PC-9 (cell line): ENCODE measurements at regions of chr2 and their contacts with region 1.

Region 1: DNA sequence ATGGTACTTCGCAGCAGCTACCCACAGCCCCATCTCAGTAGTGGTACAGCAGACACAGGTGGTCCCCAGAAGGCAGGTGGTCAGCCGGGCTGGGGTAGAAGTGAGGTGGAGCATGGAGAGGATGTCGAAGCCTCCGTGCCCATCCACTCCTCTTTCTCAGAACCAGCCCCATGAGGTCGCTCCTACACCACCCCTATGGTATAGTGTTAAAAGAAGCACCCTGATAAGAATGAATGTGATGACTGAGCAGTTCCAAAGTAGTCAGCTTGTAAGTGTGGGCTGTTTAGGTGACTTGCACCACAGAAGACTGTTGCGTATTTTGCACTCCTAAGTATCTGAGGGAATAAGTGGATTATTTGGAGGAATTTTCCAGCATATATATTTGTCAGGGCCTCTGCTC is 111.3 kb downstream of the WDSUB1 start:
- DNase-seq: no peak
- H3K4me3 ChIP-seq: no peak overlapping the region
- H3K27ac ChIP-seq: no peak overlapping the region
- H3K4me1 ChIP-seq: no peaks in the 10 kb centered on the region
- H3K27me3 ChIP-seq: no peaks in the 10 kb centered on the region
- CTCF ChIP-seq: no peak

Region 2: DNA sequence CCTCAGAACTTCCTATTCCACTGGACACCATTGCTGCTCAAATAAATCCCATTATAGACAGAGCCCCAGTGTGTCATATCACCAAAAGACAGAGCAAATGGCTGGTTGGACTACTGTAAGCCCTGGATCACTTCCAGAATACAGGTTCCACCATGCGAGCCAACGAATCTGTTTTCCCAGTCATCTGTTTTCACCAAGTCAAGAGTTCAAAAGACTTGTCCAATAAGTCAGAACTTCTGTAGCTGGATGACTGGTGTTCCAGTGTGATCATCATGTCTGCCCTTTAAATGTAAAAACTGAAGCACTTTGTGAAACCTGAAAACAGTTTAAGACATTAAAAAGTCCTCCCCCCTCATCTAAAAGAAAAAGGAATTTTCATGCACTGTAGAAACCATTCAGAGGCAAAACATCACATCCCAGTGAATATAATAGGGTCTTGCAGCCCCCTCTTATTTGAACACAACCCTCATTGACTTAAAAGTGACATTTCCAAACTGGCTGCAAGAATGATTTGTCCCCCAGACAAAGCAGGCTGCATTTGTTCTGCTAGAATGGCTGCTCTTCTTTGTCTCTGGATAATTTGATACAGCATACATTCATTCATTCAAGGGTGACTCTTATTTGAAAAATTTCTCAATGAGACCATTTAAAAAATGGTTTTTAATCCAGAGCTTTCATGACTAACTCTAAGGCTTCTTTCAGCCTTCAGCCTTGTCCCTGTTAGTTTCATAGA is 271.3 kb before region 1 on chr2:
- CTCF ChIA-PET with region 1: no interaction called
- POLR2A ChIA-PET with region 1: no interaction called
- intact Hi-C with region 1: loop called (anchors 5 kb)
- DNase-seq: no peak
- H3K4me3 ChIP-seq: no peak overlapping the region
- H3K27ac ChIP-seq: no peak overlapping the region
- H3K4me1 ChIP-seq: no peaks in the 10 kb centered on the region
- H3K27me3 ChIP-seq: no peaks in the 10 kb centered on the region
- CTCF ChIP-seq: no peak

Region 3: DNA sequence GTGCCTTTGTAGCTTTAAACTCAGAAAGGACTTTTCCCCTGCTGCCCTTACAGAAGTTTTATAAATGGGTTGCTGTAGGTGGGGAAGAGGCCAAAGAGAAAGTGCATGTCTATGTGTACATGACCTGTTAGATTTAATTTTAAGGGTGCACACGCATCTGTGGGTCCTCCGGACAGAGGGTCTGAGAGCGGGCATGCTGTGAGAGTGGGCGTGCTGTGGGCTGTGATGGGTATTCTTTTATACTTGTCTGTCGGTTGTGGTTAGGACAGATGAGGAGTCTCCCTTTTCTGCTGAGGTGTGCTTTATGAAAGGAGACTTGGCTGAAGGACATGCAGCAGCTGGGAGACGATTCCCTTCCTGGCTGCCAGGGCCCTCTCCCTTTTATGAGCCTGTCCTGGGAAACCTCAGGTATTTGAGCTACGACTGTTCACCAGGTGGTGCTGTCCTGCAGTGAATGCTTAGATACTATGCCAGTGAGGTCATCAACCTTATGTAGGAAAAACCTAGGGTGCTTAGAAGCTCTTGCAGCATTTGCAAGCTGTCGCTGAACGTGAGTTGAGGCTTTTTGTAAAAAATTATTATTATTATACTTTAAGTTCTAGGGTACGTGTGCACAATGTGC is 139.3 kb before region 1 on chr2:
- CTCF ChIA-PET with region 1: no interaction called
- POLR2A ChIA-PET with region 1: no interaction called
- intact Hi-C with region 1: loop called (anchors 2 kb)
- DNase-seq: peak; percentile 43 to 62
- H3K4me3 ChIP-seq: no peak overlapping the region
- H3K27ac ChIP-seq: peak overlapping the region; percentile 19; the same call in 1 of the 2 replicates
- H3K4me1 ChIP-seq: peaks cover 14% of the 10 kb centered on the region
- H3K27me3 ChIP-seq: no peaks in the 10 kb centered on the region
- CTCF ChIP-seq: peak; percentile 57

Region 4: DNA sequence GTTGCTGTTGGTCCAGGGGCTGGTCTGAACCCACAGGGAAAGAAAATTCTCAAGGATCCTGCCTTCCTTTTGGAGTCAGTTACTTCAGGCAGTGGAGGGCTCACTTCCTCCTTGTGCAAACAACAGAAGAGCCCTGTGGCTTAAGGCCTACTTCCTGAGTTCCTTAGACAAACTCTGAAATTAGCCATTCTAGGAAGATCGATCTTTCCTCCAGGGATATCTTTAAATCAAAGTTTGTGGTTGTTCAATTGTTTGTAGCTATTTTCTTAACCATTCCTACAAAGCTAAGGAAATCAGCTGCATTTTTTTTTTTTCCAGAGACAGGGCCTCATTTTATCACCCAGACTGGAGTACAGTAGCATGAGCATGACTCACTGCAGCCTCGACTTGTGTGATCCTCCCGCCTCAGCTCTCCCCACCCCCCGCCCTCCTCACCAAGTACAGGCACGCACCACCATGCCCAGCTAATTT is 50.7 kb before region 1 on chr2:
- CTCF ChIA-PET with region 1: no interaction called
- POLR2A ChIA-PET with region 1: no interaction called
- intact Hi-C with region 1: loop called (anchors 1 kb)
- DNase-seq: peak; percentile 22 to 86
- H3K4me3 ChIP-seq: no peak overlapping the region
- H3K27ac ChIP-seq: peak overlapping the region; percentile 77
- H3K4me1 ChIP-seq: peaks cover 31% of the 10 kb centered on the region
- H3K27me3 ChIP-seq: no peaks in the 10 kb centered on the region
- CTCF ChIP-seq: no peak

Region 5: DNA sequence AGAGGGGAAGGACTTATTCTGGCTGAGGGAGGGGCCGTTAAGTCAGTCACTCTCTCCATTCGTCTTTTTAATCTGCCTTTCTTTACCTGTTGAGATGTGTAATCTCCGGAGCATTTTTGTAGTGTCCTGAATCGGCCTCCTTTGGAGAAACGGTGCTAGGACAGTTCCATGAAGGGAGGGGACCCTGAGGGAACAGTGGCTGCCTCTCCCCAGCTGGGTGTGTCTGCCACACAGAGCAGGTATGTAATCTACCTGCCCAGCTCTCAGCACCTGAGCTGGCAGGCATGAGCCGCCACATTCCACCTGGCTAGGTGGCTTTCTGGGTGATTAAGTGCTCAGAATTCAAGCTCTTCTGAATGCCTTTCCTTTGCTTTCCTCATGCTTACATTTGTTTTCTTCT is 19.9 kb before region 1 on chr2:
- CTCF ChIA-PET with region 1: no interaction called
- POLR2A ChIA-PET with region 1: no interaction called
- intact Hi-C with region 1: loop called (anchors 2 kb)
- DNase-seq: peak; percentile 79 to 92
- H3K4me3 ChIP-seq: peak overlapping the region; percentile 20; the same call in 1 of the 2 replicates
- H3K27ac ChIP-seq: peak overlapping the region; percentile 86
- H3K4me1 ChIP-seq: peaks cover 61% of the 10 kb centered on the region
- H3K27me3 ChIP-seq: no peaks in the 10 kb centered on the region
- CTCF ChIP-seq: no peak

Region 6: GRCh38 chr2:159226059-159226461 is 50.9 kb after region 1 on chr2:
- CTCF ChIA-PET with region 1: no interaction called
- POLR2A ChIA-PET with region 1: no interaction called
- intact Hi-C with region 1: no loop called
- DNase-seq: peak; percentile 42 to 44
- H3K4me3 ChIP-seq: no peak overlapping the region
- H3K27ac ChIP-seq: 0 out of 2 replicates have a peak overlapping the region, but pooled peaks have one; percentile 15
- H3K4me1 ChIP-seq: no peaks in the 10 kb centered on the region
- H3K27me3 ChIP-seq: no peaks in the 10 kb centered on the region
- CTCF ChIP-seq: no peak